ENCODE measurements at regions of chr9 and their contacts with region 1.

Region 1: DNA sequence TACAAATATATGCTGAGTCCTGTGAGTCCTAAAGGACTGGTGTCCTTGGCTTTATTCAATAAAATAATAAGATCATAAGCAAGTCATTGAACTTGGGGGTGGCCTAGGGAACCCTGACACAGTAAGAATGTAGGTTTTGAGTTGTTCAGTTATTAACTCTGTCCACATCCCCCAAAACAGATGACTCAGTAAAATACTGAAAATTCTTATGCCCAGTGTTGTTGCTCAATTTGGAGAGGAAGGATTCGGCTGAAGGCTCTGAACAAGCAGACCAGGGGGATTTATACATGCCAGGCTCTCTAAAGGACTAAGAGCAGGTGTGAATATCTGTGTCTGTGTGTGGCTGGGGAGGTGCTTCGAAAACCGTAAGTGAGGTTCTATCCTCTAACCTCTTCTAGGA is 173.7 kb downstream of the RMI1 start:
- DNase-seq: no peak
- H3K4me3 Mint-ChIP-seq: no peak overlapping the region
- H3K27ac Mint-ChIP-seq: no peak overlapping the region
- H3K4me1 Mint-ChIP-seq: no peaks in the 10 kb centered on the region
- H3K27me3 Mint-ChIP-seq: no peaks in the 10 kb centered on the region
- CTCF ChIP-seq: no peak

Region 2: GRCh38 chr9:82781921-82782392 is 1372.4 kb before region 1 on chr9:
- CTCF ChIA-PET with region 1: interaction called, 13 read pairs
- intact Hi-C with region 1: no loop called
- DNase-seq: no peak
- H3K4me3 Mint-ChIP-seq: no peak overlapping the region
- H3K27ac Mint-ChIP-seq: no peak overlapping the region
- H3K4me1 Mint-ChIP-seq: no peaks in the 10 kb centered on the region
- H3K27me3 Mint-ChIP-seq: no peaks in the 10 kb centered on the region
- CTCF ChIP-seq: no peak

Region 3: GRCh38 chr9:84216151-84216550 is 61.8 kb after region 1 on chr9:
- CTCF ChIA-PET with region 1: no interaction called
- intact Hi-C with region 1: no loop called
- DNase-seq: no peak
- H3K4me3 Mint-ChIP-seq: no peak overlapping the region
- H3K27ac Mint-ChIP-seq: no peak overlapping the region
- H3K4me1 Mint-ChIP-seq: no peaks in the 10 kb centered on the region
- H3K27me3 Mint-ChIP-seq: peaks cover 14% of the 10 kb centered on the region
- CTCF ChIP-seq: no peak

Region 4: DNA sequence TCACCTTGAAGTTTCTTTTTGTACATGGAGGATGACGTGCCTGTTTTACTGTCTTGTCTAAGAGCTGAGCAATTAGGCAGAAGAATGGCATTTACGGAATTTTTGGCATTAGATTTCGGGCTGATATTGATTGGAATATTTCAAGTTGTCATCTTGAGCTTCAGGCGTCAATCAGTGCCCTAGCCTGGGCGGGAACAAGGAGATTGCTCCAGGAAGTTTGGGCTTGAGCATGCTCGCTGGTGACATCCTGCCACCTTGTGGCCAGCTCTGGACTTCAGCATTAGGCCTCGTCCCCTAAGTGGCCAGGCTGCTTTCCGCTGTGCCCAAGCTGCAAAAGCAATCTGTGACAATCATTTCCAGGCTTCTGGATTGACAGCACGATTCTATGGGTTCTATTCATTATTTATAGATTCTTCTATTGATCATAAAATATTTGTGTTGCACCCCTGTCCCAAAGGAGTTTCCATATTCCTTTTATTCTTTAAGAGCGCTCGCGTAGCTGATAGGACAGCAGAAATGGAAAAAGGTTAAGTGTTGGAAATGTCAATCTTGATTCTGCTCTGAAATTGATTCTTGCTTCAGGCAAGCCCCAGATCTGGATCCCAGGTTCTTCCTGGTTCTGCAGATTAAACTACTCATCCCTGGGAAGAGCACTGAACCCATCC is 106.9 kb after region 1 on chr9:
- CTCF ChIA-PET with region 1: no interaction called
- intact Hi-C with region 1: no loop called
- DNase-seq: peak; percentile 80
- H3K4me3 Mint-ChIP-seq: no peak overlapping the region
- H3K27ac Mint-ChIP-seq: no peak overlapping the region
- H3K4me1 Mint-ChIP-seq: no peaks in the 10 kb centered on the region
- H3K27me3 Mint-ChIP-seq: no peaks in the 10 kb centered on the region
- CTCF ChIP-seq: peak; percentile 62

Measured in Calu3 (cell line).